Lower leg skin (tissue), 4 donors: ENCODE measurements at regions of chr5 and their contacts with region 1.

Region 1: GRCh38 chr5:21791304-21791703 is 1061.8 kb downstream of the CDH12 start:
- DNase-seq: no peak
- H3K4me3 ChIP-seq: no peak overlapping the region
- CTCF ChIP-seq: no peak
- POLR2A ChIP-seq: no peak

Region 2: DNA sequence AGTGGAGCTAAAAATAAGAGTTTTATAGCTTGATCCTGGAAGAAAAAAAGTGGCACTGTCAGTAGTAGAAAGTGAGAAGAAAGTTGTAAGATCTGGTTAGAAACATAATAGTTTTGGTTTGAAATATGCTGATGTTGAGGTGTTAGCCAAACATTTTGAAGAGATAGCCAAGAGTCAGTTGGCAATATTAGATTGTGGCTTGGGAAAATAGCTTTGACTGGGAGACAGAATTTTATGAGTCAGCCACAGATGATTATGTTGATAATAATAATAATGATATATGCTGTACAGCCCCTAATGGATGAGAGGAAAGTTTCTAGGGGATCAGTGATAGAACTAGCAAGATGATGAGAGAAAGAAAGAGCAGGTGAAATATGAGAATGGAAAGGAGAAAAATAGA is 1790.9 kb before region 1 on chr5:
- intact Hi-C with region 1: loop called (anchors 5 kb)
- DNase-seq: no peak
- H3K4me3 ChIP-seq: no peak overlapping the region
- CTCF ChIP-seq: no peak
- POLR2A ChIP-seq: no peak

Region 3: GRCh38 chr5:22541037-22541436 is 749.7 kb after region 1 on chr5:
- intact Hi-C with region 1: no loop called
- DNase-seq: no peak
- H3K4me3 ChIP-seq: no peak overlapping the region
- CTCF ChIP-seq: no peak
- POLR2A ChIP-seq: no peak